Thyroid gland (tissue), 4 donors: ENCODE measurements at regions of chr9 and their contacts with region 1.

Region 1: DNA sequence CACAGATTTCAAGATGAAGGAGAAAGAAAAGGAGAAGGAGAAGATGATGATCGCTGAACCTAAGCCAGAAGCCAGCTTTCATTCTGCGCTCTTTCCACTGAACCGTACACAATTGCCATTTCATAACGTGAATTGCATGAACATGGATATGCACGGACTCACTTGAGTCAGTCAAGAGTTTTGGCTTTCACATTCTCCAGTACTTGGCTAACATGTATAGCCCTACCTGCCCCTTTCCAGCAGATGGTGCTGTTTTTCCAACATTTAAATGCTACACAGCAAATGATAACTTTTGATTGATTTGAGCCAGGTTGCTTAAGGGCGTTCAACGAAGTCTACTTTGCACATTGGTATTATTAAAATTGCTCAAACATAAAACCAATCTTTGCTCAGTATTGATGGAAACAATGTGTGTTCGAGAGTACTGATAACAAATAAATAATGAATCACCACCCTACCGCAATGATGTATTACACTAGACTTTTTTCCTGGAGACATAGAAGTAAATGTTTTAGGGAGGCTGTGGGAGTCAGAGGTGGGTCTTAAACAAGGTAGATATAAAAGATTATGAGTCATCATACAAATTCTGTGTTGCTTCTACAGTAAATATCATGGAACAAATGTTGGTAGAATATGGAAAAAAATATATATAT is 196.4 kb downstream of the TRPM3 start:
- DNase-seq: peak; percentile 53 to 56
- H3K4me3 ChIP-seq: no peak overlapping the region
- H3K27ac ChIP-seq: no peak overlapping the region
- H3K4me1 ChIP-seq: no peaks in the 10 kb centered on the region
- H3K27me3 ChIP-seq: no peaks in the 10 kb centered on the region
- CTCF ChIP-seq: peak; percentile 43 to 95 (median 82)
- POLR2A ChIP-seq: no peak

Region 2: DNA sequence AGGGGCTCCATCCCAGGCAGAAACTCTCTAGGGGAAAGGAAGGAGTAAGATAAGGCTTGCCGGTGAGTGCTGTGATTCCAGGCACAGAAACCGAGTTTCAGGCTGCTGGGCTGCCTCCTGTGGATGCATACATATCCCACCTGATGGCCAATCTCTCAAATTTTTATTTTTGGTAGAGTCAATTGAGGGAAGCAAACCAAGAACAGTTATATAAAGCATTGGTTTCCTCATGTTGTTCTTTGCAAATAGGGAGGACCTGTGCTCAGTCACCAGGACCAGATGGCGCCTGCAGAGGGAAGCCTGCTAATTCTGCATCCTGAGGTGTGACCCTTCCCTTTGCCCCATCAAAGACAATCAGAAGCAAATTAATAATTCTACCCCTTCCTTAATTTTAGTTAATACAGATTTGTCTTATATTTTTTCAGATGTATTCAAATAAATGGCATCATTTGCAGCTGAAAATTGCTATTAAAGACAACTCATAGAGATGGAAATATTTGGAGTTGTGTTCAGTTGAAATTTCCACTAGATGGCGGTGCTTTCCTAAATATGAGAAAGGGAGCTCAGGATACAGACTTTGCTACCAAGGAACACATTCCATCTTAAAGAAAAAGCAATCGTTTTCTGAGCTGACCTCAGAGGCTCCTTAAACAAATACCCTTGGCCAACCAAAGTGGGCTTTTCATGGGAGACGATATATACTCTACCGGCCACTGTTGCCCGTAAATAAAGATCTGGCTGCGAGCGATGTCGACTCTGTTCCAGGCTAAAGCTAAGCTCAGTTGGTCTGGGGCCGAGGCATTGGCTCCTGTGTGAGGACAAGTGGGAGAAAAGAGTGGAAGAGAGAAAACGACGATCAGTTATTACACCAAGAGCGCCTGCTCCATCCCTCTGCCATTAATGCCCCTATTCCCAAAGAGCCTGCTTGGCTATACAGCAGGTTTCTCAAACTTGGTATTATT is 284.9 kb before region 1 on chr9:
- intact Hi-C with region 1: loop called (anchors 10 kb)
- DNase-seq: no peak
- H3K4me3 ChIP-seq: no peak overlapping the region
- H3K27ac ChIP-seq: no peak overlapping the region
- H3K4me1 ChIP-seq: no peaks in the 10 kb centered on the region
- H3K27me3 ChIP-seq: no peaks in the 10 kb centered on the region
- CTCF ChIP-seq: peak in 5 of 6 experiments; percentile 15 to 78 (median 66)
- POLR2A ChIP-seq: no peak

Region 3: DNA sequence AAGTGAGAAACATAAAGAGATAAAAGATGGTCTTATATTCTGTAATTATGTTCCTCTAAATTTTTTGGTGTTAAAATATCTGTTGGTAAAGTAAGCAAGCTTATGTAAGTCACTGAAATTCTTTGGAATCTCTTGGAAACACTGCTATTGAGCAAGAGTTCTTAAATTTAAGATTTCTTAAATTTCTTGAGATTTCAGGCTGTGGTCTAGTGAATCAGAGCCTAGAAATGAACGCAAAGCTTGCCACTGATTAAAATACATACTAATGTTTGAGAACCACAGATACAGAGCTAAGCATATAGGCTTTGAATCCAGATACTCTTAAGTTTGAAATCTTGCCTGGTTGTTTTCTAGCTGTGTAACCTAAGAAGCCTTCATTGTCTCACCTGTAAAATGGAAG is 63.0 kb after region 1 on chr9:
- intact Hi-C with region 1: no loop called
- DNase-seq: no peak
- H3K4me3 ChIP-seq: no peak overlapping the region
- H3K27ac ChIP-seq: no peak overlapping the region
- H3K4me1 ChIP-seq: peaks cover 0 to 4% of the 10 kb centered on the region in 2 donors
- H3K27me3 ChIP-seq: no peaks in the 10 kb centered on the region
- CTCF ChIP-seq: no peak
- POLR2A ChIP-seq: no peak

Region 4: DNA sequence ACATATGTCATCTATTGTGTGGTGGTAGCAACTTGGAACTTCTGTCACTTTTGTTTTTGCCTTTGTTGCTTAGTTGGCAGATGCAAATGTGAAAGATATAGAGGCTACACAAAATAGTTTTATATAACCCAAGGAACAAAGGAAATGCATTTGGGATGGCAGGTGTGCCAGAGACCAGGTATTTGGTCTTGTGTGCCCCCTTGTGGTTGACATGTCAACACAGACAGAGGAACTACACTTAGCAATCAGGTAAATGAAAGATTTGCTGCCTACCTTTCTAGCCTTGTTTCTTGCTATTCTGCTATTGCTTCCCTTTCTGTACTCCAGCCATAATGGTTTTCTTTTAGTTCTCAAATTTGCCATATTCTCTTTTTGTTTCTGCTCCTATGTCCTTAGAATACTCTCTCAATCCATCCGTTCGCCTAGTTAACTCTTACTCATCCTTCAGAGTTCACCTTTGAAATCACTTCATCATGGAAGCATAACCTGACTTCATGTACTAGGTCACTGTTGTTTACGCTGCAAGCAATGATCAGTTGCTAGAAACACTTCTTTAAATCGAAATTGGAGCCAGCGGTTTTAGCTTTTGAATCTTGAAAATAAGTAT is 76.9 kb after region 1 on chr9:
- intact Hi-C with region 1: loop called (anchors 5 kb)
- DNase-seq: peak; percentile 62 to 71
- H3K4me3 ChIP-seq: no peak overlapping the region
- H3K27ac ChIP-seq: no peak overlapping the region
- H3K4me1 ChIP-seq: no peaks in the 10 kb centered on the region
- H3K27me3 ChIP-seq: no peaks in the 10 kb centered on the region
- CTCF ChIP-seq: peak in 5 of 6 experiments; percentile 39 to 87 (median 68)
- POLR2A ChIP-seq: no peak

Region 5: DNA sequence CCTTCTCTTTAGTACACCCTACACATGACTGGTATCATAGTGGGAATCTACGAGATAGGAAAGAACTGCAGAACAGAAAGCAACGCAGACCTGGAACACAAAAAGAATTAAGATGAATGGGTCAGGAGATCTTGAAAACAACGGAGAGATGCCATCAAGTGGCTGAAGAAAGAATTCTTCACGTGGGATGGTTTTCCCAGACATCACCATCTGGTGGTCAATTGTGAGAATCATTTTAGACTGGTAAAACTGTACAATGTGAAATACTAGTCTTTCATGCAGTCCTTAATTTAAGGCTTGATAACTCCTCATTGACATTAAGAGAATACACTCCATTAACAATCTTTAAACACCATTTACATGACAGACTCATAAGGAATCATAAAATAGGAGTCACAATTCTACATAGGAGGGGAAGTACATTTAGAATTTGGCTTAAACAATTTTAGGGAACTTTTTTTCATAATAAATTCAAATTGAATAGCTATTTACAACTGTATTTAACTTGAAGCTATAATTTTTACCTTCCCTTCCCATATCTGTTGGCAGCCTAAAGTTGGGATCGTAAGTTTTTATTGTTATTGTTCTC is 324.8 kb after region 1 on chr9:
- intact Hi-C with region 1: loop called (anchors 10 kb)
- DNase-seq: no peak
- H3K4me3 ChIP-seq: no peak overlapping the region
- H3K27ac ChIP-seq: no peak overlapping the region
- H3K4me1 ChIP-seq: no peaks in the 10 kb centered on the region
- H3K27me3 ChIP-seq: no peaks in the 10 kb centered on the region
- CTCF ChIP-seq: peak; percentile 32 to 72 (median 59)
- POLR2A ChIP-seq: no peak